Activated CD8-positive, alpha-beta T cell treated with anti-CD3 and anti-CD28 coated beads, Interleukin-2, amount 10 ng/mL, durations not matched to agents 7 days and 5 days (primary cell): ENCODE measurements at regions of chr7 and their contacts with region 1.

Region 1: GRCh38 chr7:140810830-140811556 is 113.7 kb downstream of the BRAF start:
- DNase-seq: peak; percentile 77
- ATAC-seq: peak; percentile 94
- H3K4me3 Mint-ChIP-seq: no peak overlapping the region
- H3K27ac Mint-ChIP-seq: no peak overlapping the region
- H3K4me1 Mint-ChIP-seq: no peaks in the 10 kb centered on the region
- H3K27me3 Mint-ChIP-seq: no peaks in the 10 kb centered on the region

Region 2: DNA sequence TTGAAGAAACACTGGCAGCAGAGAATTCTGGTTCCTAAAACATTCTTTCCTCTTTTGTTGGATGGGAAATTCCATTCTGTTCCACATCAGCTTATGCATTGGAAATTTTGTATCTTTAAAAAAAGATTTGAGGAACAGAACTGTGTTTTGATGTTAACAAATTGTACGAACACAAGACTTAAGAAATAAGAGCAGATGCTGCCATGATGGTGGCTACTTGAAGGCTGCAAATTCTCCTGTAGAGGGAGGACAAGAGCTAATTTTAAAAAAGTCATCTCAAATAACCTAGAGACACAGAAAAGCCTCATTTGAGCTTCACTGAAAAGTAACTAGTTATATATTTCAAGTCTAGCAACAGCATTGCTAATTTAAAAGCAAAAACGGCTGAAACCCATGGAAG is 84.7 kb before region 1 on chr7:
- CTCF ChIA-PET with region 1: interaction called, 11 read pairs
- POLR2A ChIA-PET with region 1: no interaction called
- DNase-seq: no peak
- ATAC-seq: no peak
- H3K4me3 Mint-ChIP-seq: no peak overlapping the region
- H3K27ac Mint-ChIP-seq: no peak overlapping the region
- H3K4me1 Mint-ChIP-seq: peaks cover 15% of the 10 kb centered on the region
- H3K27me3 Mint-ChIP-seq: no peaks in the 10 kb centered on the region

Region 3: GRCh38 chr7:140738280-140738679 is 72.7 kb before region 1 on chr7:
- CTCF ChIA-PET with region 1: no interaction called
- POLR2A ChIA-PET with region 1: no interaction called
- DNase-seq: no peak
- ATAC-seq: no peak
- H3K4me3 Mint-ChIP-seq: no peak overlapping the region
- H3K27ac Mint-ChIP-seq: no peak overlapping the region
- H3K4me1 Mint-ChIP-seq: no peaks in the 10 kb centered on the region
- H3K27me3 Mint-ChIP-seq: no peaks in the 10 kb centered on the region

Region 4: DNA sequence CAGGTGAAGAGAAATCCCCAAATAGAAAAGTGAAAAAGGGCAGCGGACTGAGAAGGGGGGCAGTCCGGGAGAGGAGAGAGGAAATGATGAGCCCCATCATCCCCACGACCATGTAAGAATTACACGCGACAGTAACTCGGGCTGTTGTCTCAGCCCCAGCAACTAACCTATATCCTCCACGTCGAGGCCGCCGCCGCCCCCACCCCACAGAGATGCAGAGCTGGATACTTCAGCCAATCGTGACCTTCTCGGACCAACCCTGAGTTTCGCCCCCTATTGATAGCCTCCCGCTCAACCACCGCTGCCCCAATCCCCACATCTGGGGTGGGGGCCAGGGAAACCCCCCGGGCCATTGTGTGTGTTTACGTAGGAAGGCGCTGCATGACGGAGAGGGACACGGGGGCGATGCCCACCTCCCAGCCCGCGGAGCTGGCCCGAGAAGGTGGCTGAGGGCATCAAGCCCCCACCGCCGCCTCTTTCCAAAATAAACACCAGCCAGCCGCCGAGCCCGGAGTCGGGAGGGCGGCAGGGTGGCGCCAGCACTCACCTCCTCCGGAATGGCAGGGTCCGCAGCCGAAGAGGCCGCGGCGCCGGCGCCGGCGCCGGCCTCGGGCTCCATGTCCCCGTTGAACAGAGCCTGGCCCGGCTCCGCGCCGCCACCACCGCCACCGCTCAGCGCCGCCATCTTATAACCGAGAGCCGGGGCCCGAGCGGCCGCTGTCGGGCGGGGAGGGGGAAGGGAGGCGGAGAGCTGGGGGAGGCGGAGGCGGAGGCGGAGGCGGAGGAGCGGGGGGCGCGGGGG is 113.2 kb after region 1 on chr7:
- CTCF ChIA-PET with region 1: interaction called, 12 read pairs
- POLR2A ChIA-PET with region 1: no interaction called
- DNase-seq: peak; percentile 79
- ATAC-seq: peak; percentile 83
- H3K4me3 Mint-ChIP-seq: no peak overlapping the region
- H3K27ac Mint-ChIP-seq: no peak overlapping the region
- H3K4me1 Mint-ChIP-seq: peaks cover 5% of the 10 kb centered on the region
- H3K27me3 Mint-ChIP-seq: no peaks in the 10 kb centered on the region

Region 5: GRCh38 chr7:140983802-140984201 is 172.8 kb after region 1 on chr7:
- CTCF ChIA-PET with region 1: interaction called, 40 read pairs
- POLR2A ChIA-PET with region 1: no interaction called
- DNase-seq: no peak
- ATAC-seq: no peak
- H3K4me3 Mint-ChIP-seq: no peak overlapping the region
- H3K27ac Mint-ChIP-seq: no peak overlapping the region
- H3K4me1 Mint-ChIP-seq: no peaks in the 10 kb centered on the region
- H3K27me3 Mint-ChIP-seq: peaks cover 11% of the 10 kb centered on the region

Region 6: GRCh38 chr7:141014524-141015395 is 203.8 kb after region 1 on chr7 and contains the start of gene MRPS33:
- CTCF ChIA-PET with region 1: interaction called, 97 read pairs
- POLR2A ChIA-PET with region 1: interaction called, 6 read pairs
- DNase-seq: peak; percentile 97
- ATAC-seq: peak; percentile 98
- H3K4me3 Mint-ChIP-seq: peak within 1 kb of the TSS; percentile 99
- H3K27ac Mint-ChIP-seq: peak within 1 kb of the TSS; percentile 100
- H3K4me1 Mint-ChIP-seq: peaks cover 34% of the 10 kb centered on the region
- H3K27me3 Mint-ChIP-seq: peaks cover 18% of the 10 kb centered on the region
- total RNA-seq, gene MRPS33: 58.1 to 62.9 TPM